ENCODE measurements at regions of chr17 and their contacts with region 1.

Region 1: GRCh38 chr17:35404360-35404759 is 27.9 kb downstream of the SLFN12 start:
- DNase-seq: peak; percentile 8
- ATAC-seq: no peak
- H3K4me3 ChIP-seq: no peak overlapping the region
- H3K27ac ChIP-seq: no peak overlapping the region
- H3K4me1 ChIP-seq: 0 out of 2 replicates have a peak, but pooled peaks cover 7% of the 10 kb centered on the region
- H3K27me3 ChIP-seq: no peaks in the 10 kb centered on the region
- CTCF ChIP-seq: no peak
- EP300 ChIP-seq: no peak
- POLR2A ChIP-seq: no peak
- RAD21 ChIP-seq: no peak

Region 2: GRCh38 chr17:35345926-35346771 is 58.2 kb before region 1 on chr17:
- CTCF ChIA-PET with region 1: no interaction called
- POLR2A ChIA-PET with region 1: no interaction called
- in situ Hi-C with region 1: loop called (anchors 10 kb)
- intact Hi-C with region 1: no loop called
- DNase-seq: no peak
- ATAC-seq: peak; percentile 48
- H3K4me3 ChIP-seq: peak overlapping the region in 1 of 3 experiments; percentile 33; a peak in 2 of 6 replicates
- H3K27ac ChIP-seq: no peak overlapping the region
- H3K4me1 ChIP-seq: peaks cover 16% of the 10 kb centered on the region
- H3K27me3 ChIP-seq: peaks cover 3 to 23% of the 10 kb centered on the region in 2 experiments; a peak in 4 of 5 replicates
- CTCF ChIP-seq: no peak
- EP300 ChIP-seq: no peak
- POLR2A ChIP-seq: no peak
- RAD21 ChIP-seq: no peak

Region 3: GRCh38 chr17:35416659-35417058 is 12.3 kb after region 1 on chr17:
- CTCF ChIA-PET with region 1: no interaction called
- POLR2A ChIA-PET with region 1: no interaction called
- in situ Hi-C with region 1: no loop called
- intact Hi-C with region 1: no loop called
- DNase-seq: no peak
- ATAC-seq: no peak
- H3K4me3 ChIP-seq: no peak overlapping the region
- H3K27ac ChIP-seq: no peak overlapping the region
- H3K4me1 ChIP-seq: no peaks in the 10 kb centered on the region
- H3K27me3 ChIP-seq: peaks cover 0 to under 1% of the 10 kb centered on the region in 2 experiments; a peak in 2 of 5 replicates
- CTCF ChIP-seq: no peak
- EP300 ChIP-seq: no peak
- POLR2A ChIP-seq: no peak
- RAD21 ChIP-seq: no peak